Activated CD4-positive, alpha-beta T cell treated with anti-CD3 and anti-CD28 coated beads, Interleukin-2, amount 10 ng/mL, durations not matched to agents 7 days and 5 days (primary cell): ENCODE measurements at regions of chr2 and their contacts with region 1.

Region 1: DNA sequence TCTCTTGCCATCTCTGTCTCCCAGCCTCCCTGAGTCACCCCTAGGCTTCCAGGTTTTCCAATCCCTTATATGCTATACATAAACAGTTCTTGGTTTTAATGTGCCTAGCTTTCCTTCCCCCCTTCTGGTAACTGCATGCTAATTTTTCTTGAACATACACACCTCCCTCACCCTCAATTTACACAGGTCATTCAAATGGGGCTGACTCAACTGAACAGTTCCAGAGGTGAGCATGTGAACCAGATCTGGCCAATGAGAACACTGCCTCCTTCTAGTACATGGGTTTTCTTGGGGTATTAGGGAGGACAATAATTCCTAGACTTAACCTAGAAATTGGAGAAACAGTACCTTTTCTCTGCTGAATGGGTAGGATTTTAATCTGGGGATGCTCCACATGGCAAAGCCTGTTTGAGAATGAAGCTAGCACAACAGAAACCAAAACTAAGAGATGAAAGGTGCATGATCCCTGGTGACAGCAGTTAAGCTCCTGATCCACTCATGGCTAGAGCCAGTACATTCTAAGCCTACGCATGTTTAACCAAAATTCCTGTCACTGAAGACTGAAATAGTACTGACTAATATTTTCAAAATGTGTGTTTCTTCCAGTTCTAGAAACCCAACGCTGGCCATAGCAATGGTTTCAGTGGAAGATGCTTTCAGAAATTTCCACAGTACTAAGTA is 11.8 kb downstream of the SLC25A12 start:
- DNase-seq: no peak
- H3K4me3 Mint-ChIP-seq: no peak overlapping the region
- H3K27ac Mint-ChIP-seq: no peak overlapping the region
- H3K4me1 Mint-ChIP-seq: peaks cover 36% of the 10 kb centered on the region
- H3K27me3 Mint-ChIP-seq: no peaks in the 10 kb centered on the region

Region 2: GRCh38 chr2:171772373-171772772 is 109.9 kb before region 1 on chr2:
- CTCF ChIA-PET with region 1: no interaction called
- POLR2A ChIA-PET with region 1: no interaction called
- DNase-seq: no peak
- H3K4me3 Mint-ChIP-seq: no peak overlapping the region
- H3K27ac Mint-ChIP-seq: no peak overlapping the region
- H3K4me1 Mint-ChIP-seq: no peaks in the 10 kb centered on the region
- H3K27me3 Mint-ChIP-seq: no peaks in the 10 kb centered on the region

Region 3: DNA sequence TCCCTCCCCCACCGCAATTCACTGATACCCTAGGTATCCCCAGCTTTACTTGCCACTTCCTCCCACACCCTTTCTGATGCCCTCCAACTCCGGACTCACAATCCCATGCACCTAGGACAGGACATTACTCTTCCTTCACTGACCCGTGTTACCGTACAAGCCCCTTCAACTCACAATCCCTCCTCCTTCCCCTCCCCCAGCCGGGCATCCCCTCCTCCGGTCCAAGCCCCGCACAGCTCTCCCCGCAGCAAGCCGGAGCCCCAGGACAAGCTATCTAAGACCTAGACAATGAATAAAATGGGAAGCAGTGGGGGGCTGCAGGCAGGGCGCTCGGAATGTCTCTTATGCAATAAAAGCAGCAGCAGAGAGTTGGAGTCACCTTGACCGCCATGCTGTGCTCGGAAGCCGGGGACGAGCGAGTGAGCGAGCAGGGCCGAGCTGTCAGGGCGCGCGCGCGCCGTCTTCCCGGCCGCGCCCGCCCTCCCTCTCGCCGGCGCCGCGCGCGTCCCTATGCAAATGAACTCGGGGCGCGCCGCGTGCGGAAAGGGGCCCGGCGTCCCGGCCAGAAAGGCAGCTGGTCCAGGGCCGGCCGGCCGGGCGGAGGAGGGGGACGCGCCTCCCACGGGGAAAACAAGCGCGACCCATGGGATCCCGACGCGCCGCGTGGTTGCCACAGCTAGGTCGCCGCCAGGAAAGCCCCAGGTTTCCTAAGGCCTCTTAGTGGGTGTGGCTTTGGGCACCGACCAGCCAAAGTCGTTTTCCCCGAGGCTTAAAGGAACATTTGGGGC is 11.8 kb after region 1 on chr2 and contains the start of gene SLC25A12:
- CTCF ChIA-PET with region 1: interaction called, 20 read pairs
- POLR2A ChIA-PET with region 1: no interaction called
- DNase-seq: peak; percentile 75
- H3K4me3 Mint-ChIP-seq: peak within 1 kb of the TSS; percentile 85
- H3K27ac Mint-ChIP-seq: peak within 1 kb of the TSS; percentile 82
- H3K4me1 Mint-ChIP-seq: peaks cover 50% of the 10 kb centered on the region
- H3K27me3 Mint-ChIP-seq: no peaks in the 10 kb centered on the region
- total RNA-seq, gene SLC25A12: 26.7 to 28.8 TPM

Region 4: GRCh38 chr2:172172513-172173173 is 290.4 kb after region 1 on chr2:
- CTCF ChIA-PET with region 1: no interaction called
- POLR2A ChIA-PET with region 1: no interaction called
- DNase-seq: peak; percentile 51
- H3K4me3 Mint-ChIP-seq: peak overlapping the region; percentile 58
- H3K27ac Mint-ChIP-seq: no peak overlapping the region
- H3K4me1 Mint-ChIP-seq: no peaks in the 10 kb centered on the region
- H3K27me3 Mint-ChIP-seq: peaks cover 31% of the 10 kb centered on the region

Region 5: GRCh38 chr2:172358691-172359556 is 476.7 kb after region 1 on chr2:
- CTCF ChIA-PET with region 1: no interaction called
- POLR2A ChIA-PET with region 1: no interaction called
- DNase-seq: no peak
- H3K4me3 Mint-ChIP-seq: no peak overlapping the region
- H3K27ac Mint-ChIP-seq: no peak overlapping the region
- H3K4me1 Mint-ChIP-seq: peaks cover 4% of the 10 kb centered on the region
- H3K27me3 Mint-ChIP-seq: no peaks in the 10 kb centered on the region